CD8-positive, alpha-beta T cell (primary cell): ENCODE measurements at regions of chr11 and their contacts with region 1.

Region 1: GRCh38 chr11:102346748-102347461 is at the start of gene BIRC2:
- DNase-seq: peak; percentile 92 to 97 (median 95)
- ATAC-seq: peak; percentile 78
- H3K4me3 ChIP-seq: peak within 1 kb of the TSS; percentile 60 to 72
- H3K4me3 Mint-ChIP-seq: peak within 1 kb of the TSS; percentile 98
- H3K27ac ChIP-seq: peak within 1 kb of the TSS; percentile 94
- H3K27ac Mint-ChIP-seq: peak within 1 kb of the TSS; percentile 99
- H3K4me1 ChIP-seq: peaks cover 29% of the 10 kb centered on the region
- H3K4me1 Mint-ChIP-seq: peaks cover 46% of the 10 kb centered on the region
- H3K27me3 ChIP-seq: no peaks in the 10 kb centered on the region
- H3K27me3 Mint-ChIP-seq: no peaks in the 10 kb centered on the region
- CTCF ChIP-seq: peak; percentile 54
- total RNA-seq, gene BIRC2: 161 to 178 TPM

Region 2: GRCh38 chr11:102293873-102294601 is 52.9 kb before region 1 on chr11:
- CTCF ChIA-PET with region 1: interaction called, 168 read pairs
- POLR2A ChIA-PET with region 1: interaction called, 7 read pairs
- intact Hi-C with region 1: loop called (anchors 1 kb)
- DNase-seq: peak in 3 of 9 experiments; percentile 40 to 86 (median 76)
- ATAC-seq: peak; percentile 94
- H3K4me3 ChIP-seq: peak overlapping the region in 1 of 2 experiments; percentile 54
- H3K4me3 Mint-ChIP-seq: peak overlapping the region; percentile 84
- H3K27ac ChIP-seq: peak overlapping the region in 1 of 2 experiments; percentile 19
- H3K27ac Mint-ChIP-seq: peak overlapping the region; percentile 88
- H3K4me1 ChIP-seq: peaks cover 8% of the 10 kb centered on the region
- H3K4me1 Mint-ChIP-seq: peaks cover 16% of the 10 kb centered on the region
- H3K27me3 ChIP-seq: no peaks in the 10 kb centered on the region
- H3K27me3 Mint-ChIP-seq: no peaks in the 10 kb centered on the region
- CTCF ChIP-seq: peak; percentile 82

Region 3: GRCh38 chr11:102323542-102324251 is 23.2 kb before region 1 on chr11:
- CTCF ChIA-PET with region 1: interaction called, 10 read pairs
- POLR2A ChIA-PET with region 1: no interaction called
- intact Hi-C with region 1: loop called in 1 of 2 experiments (anchors 2 kb)
- DNase-seq: no peak
- ATAC-seq: no peak
- H3K4me3 ChIP-seq: no peak overlapping the region
- H3K4me3 Mint-ChIP-seq: no peak overlapping the region
- H3K27ac ChIP-seq: no peak overlapping the region
- H3K27ac Mint-ChIP-seq: peak overlapping the region; percentile 18
- H3K4me1 ChIP-seq: peaks cover 42% of the 10 kb centered on the region
- H3K4me1 Mint-ChIP-seq: peaks cover 57% of the 10 kb centered on the region
- H3K27me3 ChIP-seq: no peaks in the 10 kb centered on the region
- H3K27me3 Mint-ChIP-seq: no peaks in the 10 kb centered on the region
- CTCF ChIP-seq: no peak

Region 4: DNA sequence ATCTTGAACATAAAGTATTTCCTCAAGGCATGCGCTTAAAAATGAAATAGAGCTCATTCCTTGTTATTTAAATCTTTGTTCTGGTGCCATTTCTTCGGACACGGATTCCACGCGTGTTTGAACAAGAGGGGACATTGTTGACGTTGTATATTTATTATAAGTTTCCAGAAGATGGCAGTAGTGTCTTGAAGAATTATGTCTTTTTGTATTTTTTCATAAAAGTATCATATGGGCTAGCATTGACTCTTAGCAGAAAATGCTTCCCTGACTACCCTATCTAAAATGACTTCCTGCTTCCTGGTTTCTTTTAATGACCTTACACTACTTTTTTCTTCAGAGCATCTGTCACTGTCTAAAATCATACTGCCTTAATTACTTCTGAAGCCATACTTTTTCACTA is 20.5 kb after region 1 on chr11:
- CTCF ChIA-PET with region 1: interaction called, 20 read pairs
- POLR2A ChIA-PET with region 1: interaction called, 3 read pairs
- intact Hi-C with region 1: no loop called
- DNase-seq: peak in 2 of 9 experiments; percentile 41 to 61
- ATAC-seq: peak; percentile 77
- H3K4me3 ChIP-seq: no peak overlapping the region
- H3K4me3 Mint-ChIP-seq: no peak overlapping the region
- H3K27ac ChIP-seq: no peak overlapping the region
- H3K27ac Mint-ChIP-seq: peak overlapping the region; percentile 66
- H3K4me1 ChIP-seq: peaks cover 22% of the 10 kb centered on the region
- H3K4me1 Mint-ChIP-seq: peaks cover 42% of the 10 kb centered on the region
- H3K27me3 ChIP-seq: no peaks in the 10 kb centered on the region
- H3K27me3 Mint-ChIP-seq: no peaks in the 10 kb centered on the region
- CTCF ChIP-seq: peak; percentile 70